ENCODE measurements at regions of chr7 and their contacts with region 1.

Region 1: GRCh38 chr7:31114593-31115343 is 62.7 kb downstream of the ADCYAP1R1 start:
- DNase-seq: no peak
- H3K4me3 ChIP-seq: no peak overlapping the region
- H3K27ac ChIP-seq: no peak overlapping the region
- H3K4me1 ChIP-seq: no peaks in the 10 kb centered on the region
- H3K27me3 ChIP-seq: no peaks in the 10 kb centered on the region
- CTCF ChIP-seq: no peak

Region 2: DNA sequence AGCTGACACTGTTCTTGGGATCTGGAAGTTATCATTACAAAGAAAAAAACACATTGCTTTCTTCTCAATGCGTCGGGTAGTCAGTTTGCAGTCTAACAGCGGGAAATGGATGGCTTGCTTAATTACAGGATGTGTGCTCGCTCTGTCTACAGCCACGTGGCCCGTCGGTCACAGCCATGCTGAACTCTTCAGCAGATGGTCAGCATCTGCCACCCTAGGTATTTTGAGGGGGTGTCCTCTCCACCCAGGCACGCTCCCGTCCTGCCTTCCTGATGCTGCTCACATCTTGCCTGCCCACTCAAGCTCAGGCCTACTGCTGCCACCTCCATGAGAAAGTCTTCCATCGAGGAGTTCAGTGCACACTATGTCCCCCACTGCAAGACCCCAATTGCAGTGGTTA is 383.1 kb before region 1 on chr7:
- intact Hi-C with region 1: loop called (anchors 10 kb)
- DNase-seq: no peak
- H3K4me3 ChIP-seq: no peak overlapping the region
- H3K27ac ChIP-seq: no peak overlapping the region
- H3K4me1 ChIP-seq: no peaks in the 10 kb centered on the region
- H3K27me3 ChIP-seq: peaks cover 0 to 19% of the 10 kb centered on the region in 2 donors
- CTCF ChIP-seq: no peak

Region 3: DNA sequence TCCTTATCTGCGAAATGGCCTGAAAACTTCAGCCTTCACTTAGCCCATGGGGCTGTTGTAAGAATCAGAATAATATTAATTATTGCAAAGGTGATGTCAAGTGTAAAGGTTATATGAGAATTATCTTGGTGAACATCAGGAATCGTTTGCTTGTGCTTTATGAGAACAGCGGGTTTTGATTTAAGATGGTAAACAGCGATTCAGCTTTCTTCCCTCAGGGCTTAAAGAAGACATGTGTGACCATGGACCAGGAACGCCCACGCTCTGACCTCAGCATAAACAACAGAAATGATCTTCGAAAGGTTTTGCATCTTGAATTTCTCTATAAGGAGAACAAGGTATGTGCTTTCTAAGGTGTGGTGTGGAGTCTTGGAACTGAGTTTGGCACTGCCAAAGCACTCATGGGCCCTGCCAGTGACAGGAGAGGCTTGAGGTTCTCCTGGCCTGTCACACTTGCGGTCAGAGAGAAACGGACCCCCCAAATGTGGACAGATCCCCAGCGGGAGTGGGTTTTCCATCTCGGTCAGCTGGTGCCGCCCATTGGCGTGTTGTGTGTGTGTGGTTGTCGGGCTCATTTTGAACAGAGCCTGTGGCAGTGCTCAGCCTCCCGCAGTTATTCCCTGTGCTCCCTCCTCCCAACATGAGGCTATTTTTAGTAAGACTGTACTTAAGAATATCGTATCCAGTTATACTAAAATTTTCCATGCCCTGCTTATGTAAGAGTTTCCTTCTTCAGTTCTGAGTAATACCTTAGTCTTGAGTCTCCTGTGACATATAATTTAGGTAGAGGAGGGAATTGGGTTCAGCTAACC is 336.3 kb before region 1 on chr7:
- intact Hi-C with region 1: no loop called
- DNase-seq: no peak
- H3K4me3 ChIP-seq: peak overlapping the region in 1 of 2 donors; percentile 12
- H3K27ac ChIP-seq: peak overlapping the region; percentile 70 to 78
- H3K4me1 ChIP-seq: peaks cover 0 to 46% (median 22%) of the 10 kb centered on the region in 4 donors
- H3K27me3 ChIP-seq: no peaks in the 10 kb centered on the region
- CTCF ChIP-seq: no peak

Measured in tibial artery (tissue), 4 donors.